CD8-positive, alpha-beta T cell (primary cell): ENCODE measurements at regions of chr7 and their contacts with region 1.

Region 1: GRCh38 chr7:131581241-131582051 is 25.0 kb upstream of the PODXL start:
- DNase-seq: no peak
- ATAC-seq: no peak
- H3K4me3 ChIP-seq: no peak overlapping the region
- H3K4me3 Mint-ChIP-seq: no peak overlapping the region
- H3K27ac ChIP-seq: no peak overlapping the region
- H3K27ac Mint-ChIP-seq: no peak overlapping the region
- H3K4me1 ChIP-seq: no peaks in the 10 kb centered on the region
- H3K4me1 Mint-ChIP-seq: no peaks in the 10 kb centered on the region
- H3K27me3 ChIP-seq: no peaks in the 10 kb centered on the region
- H3K27me3 Mint-ChIP-seq: peaks cover 5% of the 10 kb centered on the region
- CTCF ChIP-seq: no peak

Region 2: DNA sequence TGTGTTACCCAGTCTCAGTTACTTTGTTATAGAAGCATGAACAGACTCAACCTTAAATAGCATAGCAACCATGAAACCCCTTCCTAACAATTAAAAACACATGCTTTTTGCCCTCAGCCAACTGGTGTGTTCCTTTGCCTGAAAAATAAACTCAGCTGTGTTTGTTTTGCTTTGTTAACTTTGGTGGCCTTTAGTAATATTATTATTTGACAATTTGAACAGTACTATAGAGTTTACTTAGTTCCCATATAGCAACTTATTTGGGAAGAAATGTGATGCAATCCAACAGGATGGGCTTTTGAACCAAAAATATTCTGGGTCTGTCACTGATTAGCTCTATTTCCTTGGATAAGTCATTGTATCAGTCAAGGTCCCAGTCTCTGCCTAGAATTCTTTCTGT is 276.3 kb before region 1 on chr7:
- CTCF ChIA-PET with region 1: no interaction called
- POLR2A ChIA-PET with region 1: no interaction called
- intact Hi-C with region 1: no loop called
- DNase-seq: no peak
- ATAC-seq: no peak
- H3K4me3 ChIP-seq: no peak overlapping the region
- H3K4me3 Mint-ChIP-seq: no peak overlapping the region
- H3K27ac ChIP-seq: no peak overlapping the region
- H3K27ac Mint-ChIP-seq: no peak overlapping the region
- H3K4me1 ChIP-seq: no peaks in the 10 kb centered on the region
- H3K4me1 Mint-ChIP-seq: no peaks in the 10 kb centered on the region
- H3K27me3 ChIP-seq: no peaks in the 10 kb centered on the region
- H3K27me3 Mint-ChIP-seq: no peaks in the 10 kb centered on the region
- CTCF ChIP-seq: no peak

Region 3: GRCh38 chr7:131521651-131522163 is 59.7 kb before region 1 on chr7:
- CTCF ChIA-PET with region 1: no interaction called
- POLR2A ChIA-PET with region 1: no interaction called
- intact Hi-C with region 1: loop called in 1 of 2 experiments (anchors 10 kb)
- DNase-seq: no peak
- ATAC-seq: no peak
- H3K4me3 ChIP-seq: no peak overlapping the region
- H3K4me3 Mint-ChIP-seq: no peak overlapping the region
- H3K27ac ChIP-seq: no peak overlapping the region
- H3K27ac Mint-ChIP-seq: no peak overlapping the region
- H3K4me1 ChIP-seq: no peaks in the 10 kb centered on the region
- H3K4me1 Mint-ChIP-seq: peaks cover 9% of the 10 kb centered on the region
- H3K27me3 ChIP-seq: peaks cover 0 to 4% of the 10 kb centered on the region in 2 experiments
- H3K27me3 Mint-ChIP-seq: peaks cover 4% of the 10 kb centered on the region
- CTCF ChIP-seq: no peak